Common myeloid progenitor, CD34-positive (primary cell): ENCODE measurements at regions of chr5 and their contacts with region 1.

Region 1: GRCh38 chr5:65481635-65482295 is at the start of gene ADAMTS6:
- DNase-seq: peak; percentile 83 to 92 (median 91)
- H3K4me3 ChIP-seq: peak within 1 kb of the TSS in 6 of 7 experiments; percentile 72 to 98 (median 86)
- H3K27ac ChIP-seq: peak within 1 kb of the TSS; percentile 75 to 86
- H3K4me1 ChIP-seq: peaks cover 8 to 39% (median 26%) of the 10 kb centered on the region in 4 experiments
- H3K27me3 ChIP-seq: peaks cover 0 to 2% (median 0%) of the 10 kb centered on the region in 5 experiments

Region 2: GRCh38 chr5:64634997-64635686 is 846.6 kb before region 1 on chr5:
- CTCF ChIA-PET with region 1: interaction called, 10 read pairs
- POLR2A ChIA-PET with region 1: no interaction called
- DNase-seq: peak; percentile 42 to 71 (median 58)
- H3K4me3 ChIP-seq: no peak overlapping the region
- H3K27ac ChIP-seq: no peak overlapping the region
- H3K4me1 ChIP-seq: peaks cover 0 to 11% (median 2%) of the 10 kb centered on the region in 4 experiments
- H3K27me3 ChIP-seq: peaks cover 0 to 4% (median 0%) of the 10 kb centered on the region in 5 experiments

Region 3: GRCh38 chr5:64811050-64811640 is 670.6 kb before region 1 on chr5:
- CTCF ChIA-PET with region 1: interaction called, 37 read pairs
- POLR2A ChIA-PET with region 1: no interaction called
- DNase-seq: peak; percentile 50 to 77 (median 72)
- H3K4me3 ChIP-seq: no peak overlapping the region
- H3K27ac ChIP-seq: no peak overlapping the region
- H3K4me1 ChIP-seq: no peaks in the 10 kb centered on the region
- H3K27me3 ChIP-seq: no peaks in the 10 kb centered on the region

Region 4: GRCh38 chr5:64958757-64959391 is 522.9 kb before region 1 on chr5:
- CTCF ChIA-PET with region 1: interaction called, 12 read pairs
- POLR2A ChIA-PET with region 1: no interaction called
- DNase-seq: peak; percentile 31 to 65 (median 64)
- H3K4me3 ChIP-seq: no peak overlapping the region
- H3K27ac ChIP-seq: no peak overlapping the region
- H3K4me1 ChIP-seq: no peaks in the 10 kb centered on the region
- H3K27me3 ChIP-seq: no peaks in the 10 kb centered on the region

Region 5: DNA sequence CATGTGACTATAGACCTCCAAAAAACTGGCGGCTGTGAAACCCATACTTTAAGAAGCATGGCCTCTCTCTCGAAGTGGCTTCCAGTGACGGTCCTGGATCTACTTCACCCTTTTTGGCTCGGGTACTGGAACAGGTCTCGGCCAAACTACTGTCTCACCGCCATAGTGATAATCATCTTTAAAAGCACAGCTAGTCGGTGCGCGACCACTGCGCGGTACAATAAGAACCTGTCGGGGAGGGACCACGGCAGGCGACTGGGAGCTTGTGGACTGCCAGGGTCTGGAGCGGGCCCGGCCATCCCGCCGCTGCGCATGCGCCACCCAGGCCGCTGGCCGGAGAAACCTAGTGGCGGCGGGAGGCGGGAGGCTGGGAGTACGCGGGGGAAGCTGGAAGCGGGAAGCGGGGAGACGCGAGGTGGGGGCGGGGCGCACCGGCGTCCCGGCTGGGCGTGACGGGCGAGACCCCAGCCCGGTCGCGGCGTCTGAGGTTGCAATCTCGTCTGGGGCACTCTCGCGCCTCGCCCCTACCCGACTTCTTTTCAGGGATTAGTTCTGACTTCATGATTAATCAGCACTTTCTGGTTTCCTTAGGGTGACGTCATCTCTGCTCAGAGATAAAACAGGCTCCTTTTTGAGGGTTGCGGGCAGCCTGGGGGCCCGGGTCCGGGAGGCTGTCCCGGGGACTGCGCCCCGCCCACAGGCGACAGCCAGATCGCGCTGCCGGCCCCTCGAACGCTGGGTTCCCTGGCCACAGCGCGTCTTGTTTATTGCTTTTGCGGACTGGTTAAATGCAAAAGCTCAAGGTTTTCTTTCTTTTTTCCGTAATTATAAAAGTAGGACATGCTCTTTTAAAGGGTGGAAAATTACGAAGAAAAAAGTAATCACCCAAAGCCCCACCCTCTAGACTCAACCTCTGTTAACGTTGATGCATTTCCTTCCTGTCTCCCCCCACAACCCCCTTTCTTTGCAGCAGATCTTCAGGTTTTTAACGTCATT is 446.3 kb before region 1 on chr5:
- CTCF ChIA-PET with region 1: interaction called, 12 read pairs
- POLR2A ChIA-PET with region 1: no interaction called
- DNase-seq: peak; percentile 95 to 97 (median 97)
- H3K4me3 ChIP-seq: peak overlapping the region; percentile 42 to 84 (median 69)
- H3K27ac ChIP-seq: peak overlapping the region; percentile 55 to 85
- H3K4me1 ChIP-seq: peaks cover 8 to 25% (median 14%) of the 10 kb centered on the region in 4 experiments
- H3K27me3 ChIP-seq: no peaks in the 10 kb centered on the region

Region 6: GRCh38 chr5:65102828-65103711 is 378.7 kb before region 1 on chr5:
- CTCF ChIA-PET with region 1: interaction called, 65 read pairs
- POLR2A ChIA-PET with region 1: no interaction called
- DNase-seq: peak; percentile 77 to 91 (median 88)
- H3K4me3 ChIP-seq: peak overlapping the region; percentile 49 to 76 (median 68)
- H3K27ac ChIP-seq: peak overlapping the region; percentile 64 to 82
- H3K4me1 ChIP-seq: peaks cover 6 to 16% (median 9%) of the 10 kb centered on the region in 4 experiments
- H3K27me3 ChIP-seq: no peaks in the 10 kb centered on the region

Region 7: GRCh38 chr5:65198456-65199120 is 283.2 kb before region 1 on chr5:
- CTCF ChIA-PET with region 1: no interaction called
- POLR2A ChIA-PET with region 1: no interaction called
- DNase-seq: no peak
- H3K4me3 ChIP-seq: no peak overlapping the region
- H3K27ac ChIP-seq: no peak overlapping the region
- H3K4me1 ChIP-seq: no peaks in the 10 kb centered on the region
- H3K27me3 ChIP-seq: no peaks in the 10 kb centered on the region

Region 8: GRCh38 chr5:65512170-65512937 is 30.6 kb after region 1 on chr5:
- CTCF ChIA-PET with region 1: no interaction called
- POLR2A ChIA-PET with region 1: no interaction called
- DNase-seq: no peak
- H3K4me3 ChIP-seq: no peak overlapping the region
- H3K27ac ChIP-seq: no peak overlapping the region
- H3K4me1 ChIP-seq: no peaks in the 10 kb centered on the region
- H3K27me3 ChIP-seq: no peaks in the 10 kb centered on the region